Heart left ventricle (tissue), 16 donors: ENCODE measurements at regions of chr19 and their contacts with region 1.

Region 1: DNA sequence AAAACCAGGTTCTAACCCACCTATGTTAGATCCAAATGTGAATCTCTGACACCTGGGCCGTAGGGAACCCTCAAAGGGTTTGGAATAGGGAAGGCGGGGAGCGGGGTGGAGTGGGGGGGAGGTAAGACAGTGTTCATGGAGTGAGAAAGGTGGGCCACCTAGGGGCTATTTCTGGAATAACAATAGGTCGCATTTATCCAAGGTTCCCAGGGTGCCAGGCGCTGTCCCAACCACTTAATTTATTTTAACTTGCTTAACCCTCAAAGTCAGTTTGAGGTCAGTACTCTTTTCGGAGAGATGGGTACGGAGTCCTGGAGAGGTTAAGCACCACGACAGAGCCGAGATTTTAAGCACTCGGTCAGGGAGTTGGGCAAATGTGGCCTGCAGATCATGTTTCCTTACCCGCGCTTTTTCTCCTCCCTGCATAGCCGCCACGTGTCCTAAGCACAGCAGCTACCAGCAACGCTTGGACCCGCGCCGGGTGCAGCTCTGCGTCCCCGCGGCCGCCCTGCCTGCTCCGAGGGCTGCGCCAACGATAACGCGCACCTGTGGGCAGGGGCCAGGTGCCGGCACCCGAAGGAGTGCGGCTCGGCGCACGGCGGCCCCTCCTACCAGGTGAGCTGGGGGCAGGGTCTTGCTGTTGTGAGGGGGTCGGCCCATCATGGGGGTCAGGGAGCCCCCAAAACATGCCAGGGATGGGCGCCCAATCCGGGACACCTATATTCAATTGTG is 25.0 kb upstream of the FXYD3 start:
- DNase-seq: peak in 3 of 5 donors; percentile 36 to 55 (median 54)
- ATAC-seq: peak; percentile 79 to 91 (median 84)
- H3K4me3 ChIP-seq: no peak overlapping the region
- H3K27ac ChIP-seq: no peak overlapping the region
- H3K4me1 ChIP-seq: peaks cover 0 to 9% (median 4%) of the 10 kb centered on the region in 12 donors
- H3K27me3 ChIP-seq: peaks cover 0 to 26% (median 7%) of the 10 kb centered on the region in 9 donors
- CTCF ChIP-seq: peak; percentile 41 to 71 (median 64)
- POLR2A ChIP-seq: no peak

Region 2: GRCh38 chr19:35044317-35045117 is 46.2 kb before region 1 on chr19:
- intact Hi-C with region 1: loop called in 5 of 10 experiments (anchors 2 to 5 kb)
- DNase-seq: peak in 3 of 5 donors; percentile 49 to 55 (median 54)
- ATAC-seq: no peak
- H3K4me3 ChIP-seq: no peak overlapping the region
- H3K27ac ChIP-seq: no peak overlapping the region
- H3K4me1 ChIP-seq: peaks cover 0 to 47% (median 29%) of the 10 kb centered on the region in 12 donors
- H3K27me3 ChIP-seq: no peaks in the 10 kb centered on the region
- CTCF ChIP-seq: peak; percentile 90 to 99 (median 96)
- POLR2A ChIP-seq: no peak

Region 3: DNA sequence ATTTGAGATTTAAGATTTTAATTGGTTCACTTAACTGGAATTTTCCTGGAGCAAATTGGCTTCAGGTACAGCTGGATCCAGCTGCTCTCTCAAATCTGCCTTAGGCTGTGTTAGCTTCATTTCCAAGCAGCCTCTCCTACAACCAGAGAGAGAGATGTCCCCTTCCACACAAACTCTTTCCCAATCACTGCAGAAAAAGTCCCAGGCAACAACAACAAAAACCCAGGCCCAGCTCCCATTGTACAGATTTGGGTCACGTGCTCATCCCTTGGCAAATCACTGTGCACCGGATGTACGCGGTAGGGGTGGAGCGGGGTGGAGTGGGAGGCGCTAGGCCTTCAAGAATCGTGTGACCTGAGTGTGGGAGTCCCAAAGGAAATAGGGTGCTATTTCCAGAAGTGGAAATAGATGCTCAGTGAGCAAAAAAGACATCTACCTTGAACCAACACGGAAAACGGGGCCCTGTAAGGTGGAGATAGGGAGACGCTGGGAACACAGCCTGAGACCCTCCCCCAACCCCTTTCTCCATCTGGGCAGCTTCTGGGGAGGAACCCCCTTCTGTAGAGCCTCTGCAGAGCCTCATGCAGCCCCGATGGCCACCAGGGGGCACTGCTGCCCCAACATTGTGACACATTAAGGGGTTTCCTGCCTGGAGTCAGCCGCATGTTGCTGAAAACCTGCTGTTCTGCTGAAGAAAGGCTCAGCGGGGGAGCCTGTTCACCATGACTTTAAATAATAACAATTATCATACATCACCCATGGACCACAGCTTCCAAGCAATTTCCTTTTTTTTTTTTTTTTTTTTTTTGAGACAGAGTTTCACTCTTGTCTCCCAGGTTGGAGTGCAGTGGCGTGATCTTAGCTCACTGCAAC is 23.7 kb before region 1 on chr19:
- intact Hi-C with region 1: loop called in 1 of 10 experiments (anchors 1 kb)
- DNase-seq: peak; percentile 75 to 91 (median 83)
- ATAC-seq: peak; percentile 77 to 91 (median 86)
- H3K4me3 ChIP-seq: no peak overlapping the region
- H3K27ac ChIP-seq: no peak overlapping the region
- H3K4me1 ChIP-seq: peaks cover 0 to 5% (median 0%) of the 10 kb centered on the region in 12 donors
- H3K27me3 ChIP-seq: no peaks in the 10 kb centered on the region
- CTCF ChIP-seq: peak; percentile 75 to 92 (median 84)
- POLR2A ChIP-seq: no peak